ENCODE measurements at regions of chr3 and their contacts with region 1.

Region 1: DNA sequence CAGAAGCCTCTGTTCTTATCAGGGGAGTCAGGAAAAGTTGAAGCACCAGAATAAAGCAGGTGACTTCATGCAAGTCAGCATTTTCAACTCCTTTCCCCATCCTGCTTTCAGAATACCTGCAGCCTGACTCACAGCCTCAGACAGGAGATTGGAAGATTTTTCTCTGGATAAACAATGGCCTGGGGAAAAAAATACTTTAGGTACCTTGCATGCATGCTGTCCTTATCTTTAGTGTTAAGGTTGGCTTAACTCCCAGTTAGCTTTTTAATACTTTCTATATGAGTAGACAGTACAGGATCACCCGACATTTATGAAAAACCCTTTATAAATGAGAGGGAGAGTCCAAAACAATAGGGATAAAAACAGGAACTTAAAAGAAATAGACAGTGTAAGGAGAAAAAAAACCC is 53.6 kb downstream of the PAK2 start:
- DNase-seq: peak; percentile 61
- H3K4me3 Mint-ChIP-seq: peak overlapping the region; percentile 16
- H3K27ac Mint-ChIP-seq: peak overlapping the region; percentile 48
- H3K4me1 Mint-ChIP-seq: peaks cover 34% of the 10 kb centered on the region
- H3K27me3 Mint-ChIP-seq: no peaks in the 10 kb centered on the region
- CTCF ChIP-seq: no peak

Region 2: GRCh38 chr3:196596355-196596754 is 196.9 kb before region 1 on chr3:
- CTCF ChIA-PET with region 1: no interaction called
- intact Hi-C with region 1: no loop called
- DNase-seq: no peak
- H3K4me3 Mint-ChIP-seq: no peak overlapping the region
- H3K27ac Mint-ChIP-seq: no peak overlapping the region
- H3K4me1 Mint-ChIP-seq: no peaks in the 10 kb centered on the region
- H3K27me3 Mint-ChIP-seq: peaks cover 25% of the 10 kb centered on the region
- CTCF ChIP-seq: no peak

Region 3: GRCh38 chr3:196711838-196712513 is 81.3 kb before region 1 on chr3 and contains the starts of genes CEP19 and PIGX:
- CTCF ChIA-PET with region 1: no interaction called
- intact Hi-C with region 1: loop called (anchors 5 kb)
- DNase-seq: peak; percentile 88
- H3K4me3 Mint-ChIP-seq: peak within 1 kb of the TSS; percentile 90
- H3K27ac Mint-ChIP-seq: peak within 1 kb of the TSS; percentile 68
- H3K4me1 Mint-ChIP-seq: peaks cover 11% of the 10 kb centered on the region
- H3K27me3 Mint-ChIP-seq: no peaks in the 10 kb centered on the region
- CTCF ChIP-seq: no peak
- total RNA-seq, gene CEP19: 1.2 and 1.7 TPM in 2 replicates
- total RNA-seq, gene PIGX: 24.4 and 31.2 TPM in 2 replicates

Region 4: DNA sequence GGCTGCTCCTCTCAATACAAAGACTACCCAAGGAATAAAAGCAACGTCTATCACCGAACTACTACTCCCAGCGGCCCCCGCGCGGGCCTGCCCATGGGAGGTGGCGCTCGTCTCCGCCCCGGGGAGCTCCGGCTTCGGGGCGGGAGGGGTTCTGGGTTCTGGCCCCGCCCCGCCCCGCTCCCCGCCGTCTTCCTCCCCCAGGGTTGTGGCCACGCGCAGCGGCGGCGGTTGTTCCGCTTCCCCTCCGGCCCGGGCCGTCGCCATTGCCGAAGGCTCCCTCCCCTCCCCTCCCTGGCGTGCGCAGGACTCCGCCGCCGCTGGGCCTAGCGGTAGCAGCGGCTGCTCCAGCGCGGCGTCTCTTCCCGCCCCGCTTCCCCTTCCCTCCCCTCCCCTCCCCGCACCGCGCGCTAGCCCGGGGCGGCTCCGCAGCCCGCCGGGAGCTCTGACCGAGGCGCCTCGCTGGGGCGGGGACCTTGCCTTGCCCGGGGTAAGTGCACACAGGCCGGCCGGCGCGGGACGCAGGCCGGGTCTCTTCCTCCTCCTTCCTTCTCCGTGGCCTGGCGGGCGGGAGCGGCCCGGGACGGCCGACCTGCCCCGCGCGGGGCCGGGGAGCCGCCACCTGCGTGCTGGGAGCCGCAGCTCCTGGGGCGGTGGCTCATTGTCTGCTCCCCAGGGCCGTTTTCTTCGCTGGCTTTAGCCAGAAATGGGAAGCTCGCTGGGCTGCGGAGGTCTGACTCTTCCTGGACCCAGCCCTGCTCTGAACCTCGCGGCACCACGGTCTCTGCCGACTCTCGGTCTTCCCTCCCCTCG is 53.4 kb before region 1 on chr3 and contains the start of gene PAK2:
- CTCF ChIA-PET with region 1: interaction called, 5 read pairs
- intact Hi-C with region 1: loop called (anchors 5 kb)
- DNase-seq: peak; percentile 92
- H3K4me3 Mint-ChIP-seq: peak within 1 kb of the TSS; percentile 96
- H3K27ac Mint-ChIP-seq: peak within 1 kb of the TSS; percentile 93
- H3K4me1 Mint-ChIP-seq: no peaks in the 10 kb centered on the region
- H3K27me3 Mint-ChIP-seq: no peaks in the 10 kb centered on the region
- CTCF ChIP-seq: no peak
- total RNA-seq, gene PAK2: 68.2 and 70.4 TPM in 2 replicates

Region 5: DNA sequence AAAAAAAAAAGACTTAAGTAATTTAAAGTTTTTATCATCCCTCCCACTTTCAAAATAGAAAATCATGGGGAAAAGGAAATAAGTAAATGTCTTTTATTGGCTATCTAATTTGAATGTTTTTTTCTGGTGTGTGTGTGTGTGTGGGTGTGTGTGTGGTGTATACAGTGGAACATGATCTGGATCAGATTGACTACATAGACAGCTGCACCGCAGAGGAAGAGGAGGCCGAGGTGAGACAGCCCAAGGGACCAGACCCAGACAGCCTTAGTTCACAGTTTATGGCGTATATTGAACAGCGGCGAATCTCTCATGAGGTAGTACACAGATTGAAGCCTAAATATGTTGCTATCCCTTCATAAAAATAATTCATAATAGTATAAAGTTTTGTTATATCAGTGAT is 1042.3 kb after region 1 on chr3:
- CTCF ChIA-PET with region 1: interaction called, 14 read pairs
- intact Hi-C with region 1: no loop called
- DNase-seq: no peak
- H3K4me3 Mint-ChIP-seq: no peak overlapping the region
- H3K27ac Mint-ChIP-seq: no peak overlapping the region
- H3K4me1 Mint-ChIP-seq: no peaks in the 10 kb centered on the region
- H3K27me3 Mint-ChIP-seq: no peaks in the 10 kb centered on the region
- CTCF ChIP-seq: no peak

Measured in Calu3 (cell line).